ENCODE measurements at regions of chr7 and their contacts with region 1.

Region 1: DNA sequence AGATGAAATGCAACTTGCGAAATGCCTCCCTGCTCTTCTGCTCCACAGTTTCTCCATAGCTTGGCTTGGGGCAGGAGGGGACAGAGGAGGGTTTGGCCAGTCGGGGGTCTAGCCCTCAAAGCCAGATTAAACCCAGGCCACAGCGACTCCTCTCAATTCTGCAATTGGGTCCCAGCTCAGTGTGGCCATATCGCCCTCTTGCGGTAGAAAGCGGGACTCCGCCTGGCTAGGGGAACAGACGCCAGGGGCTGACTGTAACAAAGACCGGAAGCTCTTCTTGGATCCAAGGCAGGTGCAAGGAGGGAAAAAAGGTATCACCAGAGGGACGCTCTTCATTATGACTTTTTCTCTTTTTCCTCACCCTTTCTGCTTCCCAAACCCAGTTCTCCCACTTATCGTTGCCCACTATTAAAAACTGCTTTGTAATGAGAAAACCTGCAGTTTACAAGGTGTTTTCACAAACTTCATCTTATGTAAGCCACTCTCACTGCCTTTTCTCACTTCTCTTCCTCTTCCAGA is 36.6 kb upstream of the TNPO3 start:
- DNase-seq: peak; percentile 67 to 77
- ATAC-seq: peak; percentile 96 to 99
- H3K4me3 ChIP-seq: no peak overlapping the region
- H3K27ac ChIP-seq: no peak overlapping the region
- H3K4me1 ChIP-seq: no peaks in the 10 kb centered on the region
- CTCF ChIP-seq: peak; percentile 96
- EP300 ChIP-seq: no peak
- POLR2A ChIP-seq: no peak
- RAD21 ChIP-seq: peak; percentile 95 to 96

Region 2: DNA sequence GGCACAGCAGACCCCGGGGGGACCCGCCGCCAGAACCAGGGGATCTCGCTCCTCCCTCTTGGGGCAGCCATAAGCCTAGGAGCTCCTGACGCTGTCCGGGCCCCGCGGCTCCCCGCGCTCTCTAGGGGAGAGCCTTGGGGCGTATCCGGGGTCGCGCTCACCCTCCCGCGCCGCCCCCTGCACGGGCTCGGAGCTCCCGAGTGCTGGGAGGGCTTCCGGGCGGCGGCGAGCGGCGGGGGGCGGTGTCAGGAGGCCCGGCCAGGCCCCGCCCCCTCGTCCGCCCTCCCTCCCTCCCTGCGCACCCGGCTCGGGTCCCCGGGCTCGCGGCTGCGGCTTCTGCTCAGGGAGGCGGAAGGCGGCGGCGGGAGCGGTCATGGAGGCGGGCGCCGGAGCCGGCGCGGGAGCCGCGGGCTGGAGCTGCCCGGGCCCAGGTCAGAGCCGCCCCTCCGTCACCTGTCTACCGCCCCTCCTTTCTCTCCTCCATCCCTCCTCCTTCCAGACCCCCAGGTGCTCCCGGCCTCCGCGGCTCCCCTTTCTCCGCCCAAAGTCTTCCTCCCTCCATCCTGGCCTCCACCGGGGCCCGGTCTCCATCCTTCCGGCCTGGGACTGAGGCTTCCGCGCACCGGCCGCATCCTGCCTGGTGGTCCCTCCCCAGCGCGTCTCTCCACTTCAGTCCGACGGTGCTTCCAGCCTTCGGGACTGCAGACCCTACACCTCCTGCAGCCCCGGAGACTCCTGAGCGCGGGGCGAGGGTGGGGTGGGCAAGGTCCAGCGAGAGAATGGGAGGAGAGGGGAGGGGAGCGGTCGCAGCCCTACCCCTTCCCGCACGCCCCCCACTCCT is 300.2 kb before region 1 on chr7:
- CTCF ChIA-PET with region 1: no interaction called
- POLR2A ChIA-PET with region 1: no interaction called
- DNase-seq: peak; percentile 41 to 70
- ATAC-seq: peak; percentile 83 to 91
- H3K4me3 ChIP-seq: peak overlapping the region; percentile 83
- H3K27ac ChIP-seq: peak overlapping the region; percentile 77 to 92
- H3K4me1 ChIP-seq: 0 out of 3 replicates have a peak, but pooled peaks cover 9% of the 10 kb centered on the region
- CTCF ChIP-seq: no peak
- EP300 ChIP-seq: no peak
- POLR2A ChIP-seq: no peak; the same call in 1 of the 2 replicates
- RAD21 ChIP-seq: no peak

Region 3: DNA sequence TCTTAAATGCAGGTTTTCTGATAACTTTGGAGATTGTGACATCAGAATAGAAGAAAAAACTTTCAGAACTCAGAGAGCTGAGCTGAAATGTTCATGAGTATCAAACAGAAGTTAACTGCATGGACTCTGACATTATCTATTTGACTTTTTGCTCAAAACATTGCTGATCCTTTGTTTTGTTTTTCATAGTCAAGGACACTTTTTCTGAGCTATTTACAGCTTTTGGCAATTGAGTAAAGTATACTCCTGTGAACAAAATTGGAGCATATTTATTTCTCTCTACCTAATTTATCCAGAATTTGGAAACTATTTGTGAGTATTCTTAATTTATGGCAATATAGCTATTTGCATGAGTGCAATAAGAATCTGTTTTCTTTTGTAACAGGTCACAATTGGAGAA is 192.2 kb before region 1 on chr7:
- CTCF ChIA-PET with region 1: interaction called, 28 read pairs
- POLR2A ChIA-PET with region 1: no interaction called
- DNase-seq: no peak
- ATAC-seq: no peak
- H3K4me3 ChIP-seq: no peak overlapping the region
- H3K27ac ChIP-seq: no peak overlapping the region
- H3K4me1 ChIP-seq: peaks cover 19% of the 10 kb centered on the region; the same call in 2 of the 3 replicates
- CTCF ChIP-seq: no peak
- EP300 ChIP-seq: no peak
- POLR2A ChIP-seq: no peak
- RAD21 ChIP-seq: no peak

Region 4: GRCh38 chr7:128946923-128947830 is 144.4 kb before region 1 on chr7:
- CTCF ChIA-PET with region 1: interaction called, 13 read pairs
- POLR2A ChIA-PET with region 1: no interaction called
- DNase-seq: no peak
- ATAC-seq: peak; percentile 37 to 67; a peak in 4 of 6 replicates
- H3K4me3 ChIP-seq: no peak overlapping the region
- H3K27ac ChIP-seq: no peak overlapping the region
- H3K4me1 ChIP-seq: no peaks in the 10 kb centered on the region
- CTCF ChIP-seq: 0 out of 3 replicates have a peak, but pooled peaks have one; percentile 8
- EP300 ChIP-seq: no peak
- POLR2A ChIP-seq: no peak
- RAD21 ChIP-seq: no peak

Region 5: GRCh38 chr7:129054438-129055293 is 36.9 kb before region 1 on chr7 and contains the start of gene TNPO3:
- CTCF ChIA-PET with region 1: interaction called, 13 read pairs
- POLR2A ChIA-PET with region 1: interaction called, 7 read pairs
- DNase-seq: peak; percentile 96 to 98
- ATAC-seq: peak; percentile 93 to 95
- H3K4me3 ChIP-seq: peak within 1 kb of the TSS; percentile 85
- H3K27ac ChIP-seq: peak within 1 kb of the TSS; percentile 92 to 95
- H3K4me1 ChIP-seq: peaks cover 17% of the 10 kb centered on the region
- CTCF ChIP-seq: no peak
- EP300 ChIP-seq: no peak
- POLR2A ChIP-seq: peak; percentile 93
- RAD21 ChIP-seq: no peak
- polyA plus RNA-seq, gene TNPO3: 66.9 and 72.9 TPM in 2 replicates

Region 6: GRCh38 chr7:129101746-129102145 is 10.2 kb after region 1 on chr7:
- CTCF ChIA-PET with region 1: interaction called, 42 read pairs
- POLR2A ChIA-PET with region 1: no interaction called
- DNase-seq: no peak
- ATAC-seq: no peak
- H3K4me3 ChIP-seq: no peak overlapping the region
- H3K27ac ChIP-seq: no peak overlapping the region
- H3K4me1 ChIP-seq: 0 out of 3 replicates have a peak, but pooled peaks cover 5% of the 10 kb centered on the region
- CTCF ChIP-seq: no peak
- EP300 ChIP-seq: no peak
- POLR2A ChIP-seq: no peak
- RAD21 ChIP-seq: no peak

Region 7: GRCh38 chr7:129311429-129311828 is 219.9 kb after region 1 on chr7:
- CTCF ChIA-PET with region 1: no interaction called
- POLR2A ChIA-PET with region 1: no interaction called
- DNase-seq: no peak
- ATAC-seq: no peak
- H3K4me3 ChIP-seq: no peak overlapping the region
- H3K27ac ChIP-seq: no peak overlapping the region
- H3K4me1 ChIP-seq: no peaks in the 10 kb centered on the region
- CTCF ChIP-seq: no peak
- EP300 ChIP-seq: no peak
- POLR2A ChIP-seq: no peak
- RAD21 ChIP-seq: no peak

Measured in A549 (cell line).